Esophagus squamous epithelium (tissue), 5 donors: ENCODE measurements at regions of chr1 and their contacts with region 1.

Region 1: GRCh38 chr1:101288491-101288944 is 51.7 kb downstream of the S1PR1 start:
- DNase-seq: no peak
- H3K4me3 ChIP-seq: peak overlapping the region in 1 of 4 donors; percentile 48
- H3K27ac ChIP-seq: no peak overlapping the region
- H3K4me1 ChIP-seq: peaks cover 0 to 16% (median 3%) of the 10 kb centered on the region in 3 donors
- H3K27me3 ChIP-seq: peaks cover 0 to 6% (median 0%) of the 10 kb centered on the region in 4 donors
- CTCF ChIP-seq: peak; percentile 74 to 94 (median 88)
- POLR2A ChIP-seq: no peak

Region 2: DNA sequence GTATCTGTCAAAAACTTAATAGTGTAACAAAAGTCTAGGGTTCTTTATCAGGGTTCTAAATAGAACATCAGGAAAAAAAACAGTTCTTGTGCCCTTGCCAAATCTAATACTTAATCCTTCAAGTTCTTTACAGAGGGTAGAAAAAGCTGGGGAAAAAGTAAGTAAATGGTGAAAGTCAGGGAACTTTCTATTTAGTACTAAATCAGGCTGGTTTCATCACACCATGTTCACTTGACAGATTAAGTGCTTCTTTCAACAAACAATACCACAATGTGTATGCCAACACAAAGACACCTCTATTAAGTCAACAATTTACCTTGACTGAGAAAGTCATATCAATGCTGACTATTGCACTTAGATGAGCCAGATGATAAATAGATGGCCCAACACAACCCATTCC is 1048.6 kb before region 1 on chr1:
- intact Hi-C with region 1: no loop called
- DNase-seq: no peak
- H3K4me3 ChIP-seq: no peak overlapping the region
- H3K27ac ChIP-seq: no peak overlapping the region
- H3K4me1 ChIP-seq: no peaks in the 10 kb centered on the region
- H3K27me3 ChIP-seq: no peaks in the 10 kb centered on the region
- CTCF ChIP-seq: no peak
- POLR2A ChIP-seq: no peak

Region 3: GRCh38 chr1:100921109-100921706 is 367.3 kb before region 1 on chr1:
- intact Hi-C with region 1: loop called (anchors 5 kb)
- DNase-seq: no peak
- H3K4me3 ChIP-seq: no peak overlapping the region
- H3K27ac ChIP-seq: no peak overlapping the region
- H3K4me1 ChIP-seq: no peaks in the 10 kb centered on the region
- H3K27me3 ChIP-seq: no peaks in the 10 kb centered on the region
- CTCF ChIP-seq: peak; percentile 37 to 83 (median 72)
- POLR2A ChIP-seq: no peak

Region 4: GRCh38 chr1:101148980-101149379 is 139.5 kb before region 1 on chr1:
- intact Hi-C with region 1: loop called (anchors 10 kb)
- DNase-seq: no peak
- H3K4me3 ChIP-seq: no peak overlapping the region
- H3K27ac ChIP-seq: no peak overlapping the region
- H3K4me1 ChIP-seq: no peaks in the 10 kb centered on the region
- H3K27me3 ChIP-seq: no peaks in the 10 kb centered on the region
- CTCF ChIP-seq: no peak
- POLR2A ChIP-seq: no peak

Region 5: DNA sequence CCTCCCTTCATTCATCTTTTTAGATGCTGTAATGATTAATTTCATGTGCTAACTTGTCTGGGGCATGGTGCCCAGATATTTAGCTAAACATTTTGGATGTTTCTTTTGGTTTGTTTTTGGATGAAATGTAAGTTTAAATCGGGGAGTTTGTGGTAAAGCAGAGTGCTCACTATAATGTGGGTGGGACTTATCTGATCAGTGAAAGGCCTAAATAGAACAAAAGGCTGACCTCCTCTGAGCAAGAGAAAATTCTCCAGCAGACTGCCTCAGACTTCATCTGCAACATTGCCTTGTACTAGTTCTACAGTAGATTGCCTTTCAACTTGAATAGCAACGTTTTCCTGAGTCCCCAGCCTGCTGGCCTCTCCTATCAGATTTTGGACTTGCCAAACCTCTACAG is 131.9 kb after region 1 on chr1:
- intact Hi-C with region 1: no loop called
- DNase-seq: no peak
- H3K4me3 ChIP-seq: no peak overlapping the region
- H3K27ac ChIP-seq: no peak overlapping the region
- H3K4me1 ChIP-seq: no peaks in the 10 kb centered on the region
- H3K27me3 ChIP-seq: no peaks in the 10 kb centered on the region
- CTCF ChIP-seq: no peak
- POLR2A ChIP-seq: no peak